Left ventricle myocardium inferior (tissue), 1 donor: ENCODE measurements at regions of chr17 and their contacts with region 1.

Region 1: DNA sequence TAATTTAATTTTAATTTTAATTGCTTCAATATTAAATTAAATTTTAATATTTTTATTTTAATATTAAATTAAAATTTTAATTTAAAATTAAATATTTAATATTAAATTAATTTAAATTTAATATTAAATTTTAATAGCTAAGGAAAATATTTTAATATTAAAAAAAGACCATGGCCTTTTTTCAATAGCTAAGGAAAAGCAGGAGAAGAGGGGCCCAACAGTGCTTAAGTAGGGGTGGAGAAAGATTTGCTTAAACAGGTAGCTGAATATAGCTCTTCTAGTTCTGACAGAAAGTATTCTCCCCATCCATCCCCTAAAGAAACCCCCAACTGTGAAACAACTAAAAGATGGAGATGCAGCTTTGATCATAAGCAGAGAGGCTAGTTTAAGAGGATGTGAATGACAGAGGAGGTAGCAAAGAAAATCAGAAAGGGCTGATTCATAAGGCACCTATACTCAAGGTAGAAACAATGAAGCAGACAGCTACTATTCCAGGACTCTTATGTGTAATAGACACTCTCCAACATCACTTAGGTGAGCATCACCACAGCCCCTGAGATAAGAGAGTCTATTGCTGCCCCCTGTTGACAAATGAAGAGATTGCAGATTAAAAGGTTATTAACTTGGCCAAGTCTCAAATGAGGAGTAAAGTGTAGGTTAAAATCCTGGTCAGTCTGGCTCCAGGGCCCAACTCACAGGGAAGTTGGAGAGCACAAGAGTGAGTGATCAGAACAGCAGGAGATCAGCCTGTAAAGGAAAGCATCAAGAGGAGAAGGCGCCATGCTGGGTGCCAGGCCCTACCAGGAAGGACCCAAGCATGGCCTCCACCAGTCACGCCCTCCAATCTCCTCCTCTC is 7.8 kb upstream of the RNASEK start:
- DNase-seq: no peak
- H3K4me3 ChIP-seq: no peak overlapping the region
- H3K27ac ChIP-seq: no peak overlapping the region
- H3K4me1 ChIP-seq: peaks cover 1% of the 10 kb centered on the region
- H3K27me3 ChIP-seq: no peaks in the 10 kb centered on the region
- CTCF ChIP-seq: peak; percentile 79

Region 2: GRCh38 chr17:6913608-6914443 is 90.8 kb before region 1 on chr17:
- intact Hi-C with region 1: loop called (anchors 5 kb)
- DNase-seq: peak; percentile 79
- H3K4me3 ChIP-seq: peak overlapping the region; percentile 60
- H3K27ac ChIP-seq: peak overlapping the region; percentile 23
- H3K4me1 ChIP-seq: peaks cover 11% of the 10 kb centered on the region
- H3K27me3 ChIP-seq: peaks cover 44% of the 10 kb centered on the region
- CTCF ChIP-seq: peak; percentile 92